Activated CD4-positive, alpha-beta memory T cell treated with anti-CD3 and anti-CD28 coated beads for 36 hours (primary cell): ENCODE measurements at regions of chr1 and their contacts with region 1.

Region 1: GRCh38 chr1:24847995-24848881 is 81.8 kb downstream of the RUNX3 start:
- DNase-seq: peak; percentile 94
- H3K4me3 Mint-ChIP-seq: peak overlapping the region; percentile 65
- H3K27ac Mint-ChIP-seq: no peak overlapping the region
- H3K4me1 Mint-ChIP-seq: peaks cover 14% of the 10 kb centered on the region
- H3K27me3 Mint-ChIP-seq: no peaks in the 10 kb centered on the region

Region 2: GRCh38 chr1:24830680-24831272 is 17.5 kb before region 1 on chr1:
- CTCF ChIA-PET with region 1: interaction called, 28 read pairs
- POLR2A ChIA-PET with region 1: no interaction called
- intact Hi-C with region 1: no loop called
- DNase-seq: no peak
- H3K4me3 Mint-ChIP-seq: no peak overlapping the region
- H3K27ac Mint-ChIP-seq: no peak overlapping the region
- H3K4me1 Mint-ChIP-seq: no peaks in the 10 kb centered on the region
- H3K27me3 Mint-ChIP-seq: peaks cover 4% of the 10 kb centered on the region

Region 3: DNA sequence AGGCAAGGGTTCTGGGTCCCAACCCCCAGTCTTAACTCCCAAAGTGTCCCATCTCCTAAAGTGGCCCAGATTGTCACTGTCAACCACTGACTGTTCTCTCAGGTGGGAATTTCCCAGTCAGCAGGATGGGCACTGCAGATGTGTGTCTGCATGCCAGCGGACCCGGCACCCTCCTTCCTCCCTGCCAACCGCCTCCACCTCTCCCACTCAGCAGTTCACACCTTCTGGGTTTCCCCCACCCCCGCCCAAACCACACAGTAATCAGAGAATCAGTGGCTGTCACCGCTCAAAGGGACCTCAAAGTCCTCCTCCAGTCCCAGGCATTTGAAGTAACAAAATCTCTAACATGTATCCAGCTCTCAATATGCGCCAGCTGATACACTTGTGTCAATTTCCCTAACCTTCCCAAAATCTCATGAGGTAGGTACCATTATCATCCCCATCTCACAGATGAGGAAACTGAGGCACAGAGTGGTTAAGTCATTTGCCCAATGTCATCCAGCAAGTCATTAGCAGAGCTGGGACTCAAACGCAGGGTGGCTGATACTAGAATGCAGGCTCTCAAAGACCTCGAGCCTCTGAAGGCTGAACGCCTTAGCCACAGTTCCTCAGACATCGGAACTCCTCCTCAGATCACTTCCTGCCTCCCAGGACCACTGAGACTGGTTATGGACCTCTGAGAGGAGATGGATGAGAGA is 77.0 kb after region 1 on chr1:
- CTCF ChIA-PET with region 1: interaction called, 9 read pairs
- POLR2A ChIA-PET with region 1: interaction called, 5 read pairs
- intact Hi-C with region 1: loop called (anchors 1 kb)
- DNase-seq: peak; percentile 95
- H3K4me3 Mint-ChIP-seq: peak overlapping the region; percentile 81
- H3K27ac Mint-ChIP-seq: peak overlapping the region; percentile 91
- H3K4me1 Mint-ChIP-seq: peaks cover 69% of the 10 kb centered on the region
- H3K27me3 Mint-ChIP-seq: no peaks in the 10 kb centered on the region

Region 4: GRCh38 chr1:25099343-25099951 is 251.2 kb after region 1 on chr1:
- CTCF ChIA-PET with region 1: interaction called, 75 read pairs
- POLR2A ChIA-PET with region 1: interaction called, 3 read pairs
- intact Hi-C with region 1: loop called (anchors 1 kb)
- DNase-seq: peak; percentile 59
- H3K4me3 Mint-ChIP-seq: no peak overlapping the region
- H3K27ac Mint-ChIP-seq: no peak overlapping the region
- H3K4me1 Mint-ChIP-seq: peaks cover 50% of the 10 kb centered on the region
- H3K27me3 Mint-ChIP-seq: peaks cover 2% of the 10 kb centered on the region

Region 5: DNA sequence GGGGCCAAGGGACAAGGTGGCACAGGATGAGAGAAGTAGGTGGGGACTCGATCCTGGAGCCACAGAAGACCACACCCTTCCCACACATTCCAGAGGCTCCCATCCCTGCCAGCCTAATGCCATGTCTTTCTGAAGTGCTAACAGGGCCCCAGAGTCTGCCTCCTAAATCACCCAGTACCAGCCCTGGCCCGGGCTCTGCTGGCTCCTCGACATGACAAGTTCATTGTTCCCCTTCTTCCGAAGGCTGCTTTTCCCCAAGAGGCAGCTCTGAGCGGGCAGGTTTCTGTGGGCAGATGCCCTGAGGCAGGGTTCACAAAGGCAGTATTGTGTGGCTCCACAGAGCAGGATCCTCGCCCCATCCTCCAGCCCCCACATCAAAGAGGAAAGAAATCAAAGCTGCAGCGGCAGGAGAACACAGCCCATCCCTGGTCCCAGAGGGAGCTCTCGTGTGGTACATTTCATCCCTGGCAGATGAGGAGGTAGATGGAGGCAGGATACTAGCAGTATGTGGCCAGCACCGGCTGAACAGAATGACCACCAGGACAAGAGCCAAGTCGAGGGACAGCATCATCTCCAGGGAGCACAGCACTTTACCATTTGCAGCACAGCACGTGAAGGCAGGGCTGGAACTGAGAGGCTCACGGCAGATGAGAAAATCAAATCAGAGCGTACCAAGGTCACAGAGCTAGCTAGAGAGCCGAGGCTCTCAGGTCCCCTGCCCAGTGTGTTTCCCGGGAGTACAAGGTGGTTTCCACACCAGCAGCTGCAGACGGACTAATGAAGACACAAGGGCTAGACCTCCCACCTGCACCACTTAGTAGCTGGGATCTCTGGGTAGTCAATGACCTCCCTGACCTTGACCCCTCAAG is 319.3 kb after region 1 on chr1:
- CTCF ChIA-PET with region 1: no interaction called
- POLR2A ChIA-PET with region 1: no interaction called
- intact Hi-C with region 1: no loop called
- DNase-seq: no peak
- H3K4me3 Mint-ChIP-seq: no peak overlapping the region
- H3K27ac Mint-ChIP-seq: no peak overlapping the region
- H3K4me1 Mint-ChIP-seq: no peaks in the 10 kb centered on the region
- H3K27me3 Mint-ChIP-seq: no peaks in the 10 kb centered on the region

Region 6: DNA sequence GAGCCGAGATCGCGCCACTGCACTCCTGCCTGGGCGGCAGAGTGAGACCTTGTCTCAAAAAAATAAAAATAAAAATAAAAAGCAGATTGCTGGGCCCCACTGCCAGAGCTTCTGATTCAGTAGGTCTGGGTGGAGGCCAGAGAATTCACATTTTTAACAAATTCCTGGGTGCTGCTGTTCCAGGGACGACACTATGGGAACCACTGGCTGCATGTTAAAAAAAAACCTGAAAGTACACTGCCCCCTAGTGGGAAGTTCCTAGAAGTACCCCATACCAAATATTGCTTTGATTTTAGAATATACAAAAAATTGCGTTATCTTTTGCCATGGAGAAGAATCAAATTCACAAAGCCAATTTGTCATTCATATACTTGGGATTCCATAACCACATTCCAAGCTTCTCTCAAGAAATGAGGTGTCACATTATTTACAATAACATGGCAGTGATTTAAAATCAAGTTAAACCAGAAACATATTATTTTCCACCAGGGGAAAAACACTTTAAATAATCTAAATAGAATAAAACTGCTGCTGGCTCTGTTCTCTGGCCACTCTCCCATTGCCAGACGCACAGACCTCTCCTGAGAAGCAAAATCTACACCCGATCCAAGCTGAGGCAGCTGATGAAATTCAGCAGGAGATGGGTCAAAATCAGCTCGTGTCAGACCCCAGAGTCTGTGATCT is 356.7 kb after region 1 on chr1:
- CTCF ChIA-PET with region 1: interaction called, 34 read pairs
- POLR2A ChIA-PET with region 1: no interaction called
- intact Hi-C with region 1: loop called (anchors 1 kb)
- DNase-seq: no peak
- H3K4me3 Mint-ChIP-seq: no peak overlapping the region
- H3K27ac Mint-ChIP-seq: no peak overlapping the region
- H3K4me1 Mint-ChIP-seq: no peaks in the 10 kb centered on the region
- H3K27me3 Mint-ChIP-seq: peaks cover under 1% of the 10 kb centered on the region